ENCODE measurements at regions of chr2 and their contacts with region 1.

Region 1: DNA sequence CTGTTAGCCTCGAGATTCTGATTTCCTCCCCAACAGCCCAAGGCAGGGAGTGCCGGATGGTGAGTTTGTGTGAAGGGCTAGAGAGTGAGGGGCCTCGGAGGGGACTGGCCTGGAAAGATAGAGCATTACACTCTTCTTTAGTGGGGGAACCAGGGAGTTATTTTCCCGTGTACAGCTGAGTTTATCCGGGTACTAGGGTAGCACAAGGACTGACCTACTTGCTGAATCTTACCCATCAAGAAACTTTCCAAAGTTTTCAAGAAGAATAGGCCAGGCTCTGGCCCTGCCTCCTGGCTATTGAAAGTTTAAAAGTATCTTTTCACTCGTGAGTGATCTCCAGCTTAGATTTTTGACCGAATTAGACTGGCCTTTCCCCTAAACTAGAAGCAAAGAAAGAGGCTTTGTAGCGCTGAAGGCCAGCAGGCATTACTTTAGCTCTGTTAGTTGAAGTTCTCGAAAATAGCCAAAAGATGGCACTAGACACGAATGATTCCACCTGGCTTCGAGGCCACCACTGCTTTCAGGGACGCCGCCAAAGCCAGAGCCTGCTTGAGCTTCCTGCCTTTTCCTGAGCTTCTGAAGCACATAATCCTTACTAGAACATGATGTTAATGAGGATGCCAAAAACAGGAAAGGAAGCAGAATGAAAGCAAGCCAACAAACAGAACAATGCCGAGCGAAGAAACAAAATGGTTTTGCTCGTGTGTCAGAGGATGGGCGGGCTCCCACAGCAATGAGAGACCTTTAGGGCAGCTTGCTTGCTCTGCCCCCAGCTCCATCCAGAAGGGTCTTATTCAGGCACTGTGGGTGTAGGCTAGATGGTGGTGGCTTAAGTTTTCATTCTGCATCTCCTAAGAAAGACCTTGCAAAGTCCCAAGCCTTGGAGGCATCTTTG is 55.8 kb downstream of the TSN start:
- DNase-seq: peak in 1 of 2 experiments; percentile 62
- H3K4me3 ChIP-seq: no peak overlapping the region
- H3K27ac ChIP-seq: no peak overlapping the region
- H3K4me1 ChIP-seq: peaks cover 0 to 5% (median 3%) of the 10 kb centered on the region in 4 experiments; a peak in 3 of 7 replicates
- H3K27me3 ChIP-seq: no peaks in the 10 kb centered on the region
- CTCF ChIP-seq: peak; percentile 25 to 82 (median 73)
- EP300 ChIP-seq: no peak
- POLR2A ChIP-seq: no peak
- RAD21 ChIP-seq: peak; percentile 92 to 95

Region 2: GRCh38 chr2:121826036-121826435 is 14.8 kb after region 1 on chr2:
- CTCF ChIA-PET with region 1: interaction called, 24 read pairs
- POLR2A ChIA-PET with region 1: no interaction called
- DNase-seq: no peak
- H3K4me3 ChIP-seq: no peak overlapping the region
- H3K27ac ChIP-seq: no peak overlapping the region
- H3K4me1 ChIP-seq: peaks cover 0 to 7% (median 3%) of the 10 kb centered on the region in 4 experiments; a peak in 4 of 7 replicates
- H3K27me3 ChIP-seq: no peaks in the 10 kb centered on the region
- CTCF ChIP-seq: no peak
- EP300 ChIP-seq: no peak
- POLR2A ChIP-seq: no peak
- RAD21 ChIP-seq: no peak

Region 3: DNA sequence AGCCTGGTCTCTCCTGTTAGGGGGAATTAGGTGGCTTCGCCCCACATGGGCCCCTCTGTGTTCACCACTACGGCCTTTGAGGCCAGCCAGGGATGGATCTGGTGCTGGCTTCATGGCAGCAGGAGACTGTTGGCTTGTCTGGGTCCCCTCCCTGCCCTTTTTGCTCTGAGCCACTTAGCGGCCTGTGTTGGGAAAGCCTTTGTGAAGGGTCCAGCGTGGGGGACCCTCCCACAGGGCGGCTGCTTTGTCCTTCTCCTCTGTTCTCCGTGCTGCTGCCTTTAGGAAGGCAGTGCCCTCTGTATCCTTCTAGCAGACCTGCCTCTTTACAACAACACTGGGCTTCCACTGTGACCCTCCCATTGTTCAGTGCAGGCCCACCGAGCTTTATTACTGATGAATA is 62.7 kb after region 1 on chr2:
- CTCF ChIA-PET with region 1: no interaction called
- POLR2A ChIA-PET with region 1: no interaction called
- DNase-seq: no peak
- H3K4me3 ChIP-seq: no peak overlapping the region
- H3K27ac ChIP-seq: no peak overlapping the region
- H3K4me1 ChIP-seq: peaks cover 0 to 2% (median 0%) of the 10 kb centered on the region in 4 experiments; a peak in 2 of 7 replicates
- H3K27me3 ChIP-seq: no peaks in the 10 kb centered on the region
- CTCF ChIP-seq: no peak
- EP300 ChIP-seq: no peak
- POLR2A ChIP-seq: no peak
- RAD21 ChIP-seq: 0 out of 4 replicates have a peak, but pooled peaks of 1 of the 2 experiments have one; percentile 7

Region 4: DNA sequence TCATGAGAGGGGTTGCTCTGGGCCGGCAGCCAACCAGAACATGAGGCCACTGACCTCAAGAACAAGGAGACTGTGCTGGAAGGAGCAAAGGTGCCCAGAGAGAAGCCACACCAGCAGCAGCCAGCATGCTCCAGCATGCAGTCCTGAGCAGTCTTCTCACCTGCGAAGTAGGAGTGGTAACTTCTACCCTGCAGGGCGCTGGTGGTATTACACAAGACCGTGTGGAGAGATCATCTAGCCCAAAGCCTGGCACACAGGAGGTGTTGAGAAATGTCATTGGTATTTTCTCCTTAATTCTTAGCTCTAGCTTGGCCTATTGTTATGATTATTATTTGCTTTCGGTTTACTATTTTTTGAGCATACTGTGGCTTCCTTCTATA is 77.0 kb after region 1 on chr2:
- CTCF ChIA-PET with region 1: interaction called, 15 read pairs
- POLR2A ChIA-PET with region 1: no interaction called
- DNase-seq: peak in 1 of 2 experiments; percentile 86
- H3K4me3 ChIP-seq: no peak overlapping the region
- H3K27ac ChIP-seq: no peak overlapping the region
- H3K4me1 ChIP-seq: 0 out of 7 replicates have a peak, but pooled peaks cover 0 to 3% (median 0%) of the 10 kb centered on the region in 4 experiments
- H3K27me3 ChIP-seq: peaks cover 0 to 3% (median 1%) of the 10 kb centered on the region in 4 experiments; a peak in 3 of 7 replicates
- CTCF ChIP-seq: peak; percentile 50 to 78 (median 70)
- EP300 ChIP-seq: no peak
- POLR2A ChIP-seq: no peak
- RAD21 ChIP-seq: peak; percentile 39 to 50

Region 5: DNA sequence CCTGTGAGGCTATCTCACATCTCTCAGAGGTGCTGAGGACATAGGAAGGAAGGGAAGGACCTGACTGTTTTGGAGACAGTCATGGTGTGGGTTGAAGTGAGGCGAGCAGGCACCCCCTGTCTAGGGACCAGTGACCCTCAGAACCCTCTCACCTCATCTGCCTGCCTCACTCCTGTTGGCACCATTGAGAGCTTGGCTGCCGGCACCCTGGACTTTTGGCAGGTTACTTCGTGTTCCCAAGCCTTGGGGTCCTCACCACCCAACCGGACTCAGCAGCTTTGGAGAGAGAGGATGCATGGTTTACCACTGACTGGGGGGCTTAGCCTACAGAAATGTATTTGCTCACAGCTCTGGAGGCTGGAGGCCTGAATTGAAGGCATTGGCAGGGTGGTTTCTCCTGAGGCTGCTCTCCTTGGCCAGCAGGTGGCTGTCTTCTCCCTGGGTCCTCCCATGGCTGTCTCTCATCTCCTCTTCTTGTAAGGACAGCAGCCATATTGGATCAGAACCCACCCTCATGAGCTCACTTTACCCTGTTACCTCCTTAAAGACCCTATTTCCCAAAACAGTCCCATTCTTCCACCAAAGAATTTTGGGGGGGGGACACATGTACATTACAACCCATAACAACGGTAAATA is 86.2 kb after region 1 on chr2:
- CTCF ChIA-PET with region 1: interaction called, 14 read pairs
- POLR2A ChIA-PET with region 1: no interaction called
- DNase-seq: no peak
- H3K4me3 ChIP-seq: no peak overlapping the region
- H3K27ac ChIP-seq: no peak overlapping the region
- H3K4me1 ChIP-seq: no peaks in the 10 kb centered on the region; a peak in 1 of 7 replicates
- H3K27me3 ChIP-seq: no peaks in the 10 kb centered on the region; a peak in 1 of 7 replicates
- CTCF ChIP-seq: peak; percentile 46 to 70 (median 61); a peak in 3 of 4 replicates
- EP300 ChIP-seq: no peak
- POLR2A ChIP-seq: no peak
- RAD21 ChIP-seq: peak; percentile 53 to 61

Region 6: GRCh38 chr2:121907928-121908327 is 96.7 kb after region 1 on chr2:
- CTCF ChIA-PET with region 1: interaction called, 11 read pairs
- POLR2A ChIA-PET with region 1: no interaction called
- DNase-seq: no peak
- H3K4me3 ChIP-seq: no peak overlapping the region
- H3K27ac ChIP-seq: no peak overlapping the region
- H3K4me1 ChIP-seq: no peaks in the 10 kb centered on the region; a peak in 1 of 7 replicates
- H3K27me3 ChIP-seq: no peaks in the 10 kb centered on the region
- CTCF ChIP-seq: no peak
- EP300 ChIP-seq: no peak
- POLR2A ChIP-seq: no peak
- RAD21 ChIP-seq: no peak